Right cardiac atrium (tissue), 5 donors: ENCODE measurements at regions of chr11 and their contacts with region 1.

Region 1: DNA sequence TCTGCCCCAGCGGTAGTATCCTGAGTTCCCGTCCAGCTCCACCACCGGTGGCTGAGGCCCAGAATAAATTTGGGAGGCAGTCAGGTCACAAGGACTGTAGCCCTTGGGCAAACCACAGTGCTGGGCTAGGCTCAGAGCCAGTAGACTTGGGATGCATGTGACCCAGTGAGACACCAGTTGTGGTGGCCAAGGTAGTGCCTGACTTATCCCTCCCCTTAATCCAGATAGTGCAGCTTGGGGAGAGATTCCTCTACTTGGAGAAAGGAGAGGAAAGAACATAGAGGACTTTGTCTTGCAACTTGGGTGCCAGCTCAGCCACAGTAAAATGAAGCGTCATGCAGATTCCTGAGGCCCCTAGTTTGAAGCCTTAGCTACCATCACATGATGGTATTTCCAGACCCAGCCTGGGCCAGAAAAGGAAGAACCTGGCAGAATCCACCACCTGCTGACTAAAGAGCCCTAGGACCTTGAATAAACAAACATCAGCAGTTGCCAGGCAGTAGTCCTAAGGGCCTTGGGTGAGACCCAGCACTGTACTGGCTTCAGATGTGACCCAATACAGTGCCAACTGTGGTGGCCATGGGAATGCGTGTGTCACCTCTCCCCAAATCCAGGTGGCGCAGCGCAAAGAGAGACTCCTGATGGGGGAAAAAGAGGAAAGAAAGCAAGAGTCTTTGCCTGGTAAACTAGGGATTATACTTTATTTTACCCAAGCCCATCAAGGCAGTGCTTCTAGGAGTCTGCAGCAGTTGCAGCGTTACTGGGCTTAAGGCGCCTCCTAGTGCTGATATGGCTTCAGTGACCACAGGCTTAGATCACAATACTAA is 17.0 kb upstream of the DDX10 start:
- DNase-seq: peak; percentile 66 to 85 (median 81)
- ATAC-seq: peak; percentile 92 to 94
- H3K4me3 ChIP-seq: no peak overlapping the region
- H3K27ac ChIP-seq: peak overlapping the region; percentile 50
- H3K4me1 ChIP-seq: no peaks in the 10 kb centered on the region
- H3K27me3 ChIP-seq: no peaks in the 10 kb centered on the region

Region 2: DNA sequence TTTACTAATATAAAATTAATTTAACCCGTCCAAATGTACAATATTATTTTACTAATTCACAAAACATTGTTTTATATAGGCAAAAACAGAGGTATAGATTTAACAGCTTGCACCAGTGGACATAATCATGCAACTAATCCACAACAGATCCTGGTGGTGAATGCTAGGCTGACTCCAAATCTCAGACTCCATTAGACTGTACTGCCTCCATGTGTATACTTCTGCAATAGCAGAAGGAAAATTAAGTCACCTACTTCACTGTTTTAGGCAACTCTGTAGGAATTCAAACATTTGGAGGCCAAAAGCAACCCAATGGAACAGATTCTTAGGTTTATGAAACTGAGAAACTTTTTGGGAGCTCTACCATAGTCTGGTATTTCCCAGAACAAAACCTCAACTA is 749.6 kb before region 1 on chr11:
- intact Hi-C with region 1: no loop called
- DNase-seq: no peak
- ATAC-seq: peak; percentile 45 to 48
- H3K4me3 ChIP-seq: no peak overlapping the region
- H3K27ac ChIP-seq: no peak overlapping the region
- H3K4me1 ChIP-seq: no peaks in the 10 kb centered on the region
- H3K27me3 ChIP-seq: no peaks in the 10 kb centered on the region

Region 3: DNA sequence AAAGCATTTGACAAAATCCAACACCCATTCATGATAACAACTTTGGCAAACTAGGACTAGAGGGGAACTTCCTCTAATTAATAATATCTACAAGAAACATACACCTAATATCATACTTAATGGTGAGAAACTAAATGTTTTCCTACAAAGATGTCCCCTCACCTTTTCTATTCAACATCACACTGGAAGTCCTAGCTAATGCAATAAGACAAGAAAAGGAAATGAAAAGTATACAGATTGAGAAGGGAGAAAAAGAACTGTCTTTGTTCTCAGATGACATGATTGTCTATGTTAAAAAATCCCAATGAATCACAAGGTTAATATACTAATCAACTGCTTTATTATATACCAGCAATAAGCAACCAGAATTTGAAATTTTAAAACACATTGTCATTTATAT is 233.0 kb before region 1 on chr11:
- intact Hi-C with region 1: loop called in 1 of 4 experiments (anchors 5 kb)
- DNase-seq: no peak
- ATAC-seq: no peak
- H3K4me3 ChIP-seq: no peak overlapping the region
- H3K27ac ChIP-seq: no peak overlapping the region
- H3K4me1 ChIP-seq: no peaks in the 10 kb centered on the region
- H3K27me3 ChIP-seq: no peaks in the 10 kb centered on the region

Region 4: GRCh38 chr11:108497317-108498045 is 150.4 kb before region 1 on chr11:
- intact Hi-C with region 1: loop called in 1 of 4 experiments (anchors 10 kb)
- DNase-seq: peak; percentile 90 to 93 (median 91)
- ATAC-seq: peak; percentile 97 to 98
- H3K4me3 ChIP-seq: peak overlapping the region; percentile 88
- H3K27ac ChIP-seq: peak overlapping the region; percentile 93
- H3K4me1 ChIP-seq: peaks cover 3% of the 10 kb centered on the region
- H3K27me3 ChIP-seq: no peaks in the 10 kb centered on the region